ENCODE measurements at regions of chr2 and their contacts with region 1.

Region 1: DNA sequence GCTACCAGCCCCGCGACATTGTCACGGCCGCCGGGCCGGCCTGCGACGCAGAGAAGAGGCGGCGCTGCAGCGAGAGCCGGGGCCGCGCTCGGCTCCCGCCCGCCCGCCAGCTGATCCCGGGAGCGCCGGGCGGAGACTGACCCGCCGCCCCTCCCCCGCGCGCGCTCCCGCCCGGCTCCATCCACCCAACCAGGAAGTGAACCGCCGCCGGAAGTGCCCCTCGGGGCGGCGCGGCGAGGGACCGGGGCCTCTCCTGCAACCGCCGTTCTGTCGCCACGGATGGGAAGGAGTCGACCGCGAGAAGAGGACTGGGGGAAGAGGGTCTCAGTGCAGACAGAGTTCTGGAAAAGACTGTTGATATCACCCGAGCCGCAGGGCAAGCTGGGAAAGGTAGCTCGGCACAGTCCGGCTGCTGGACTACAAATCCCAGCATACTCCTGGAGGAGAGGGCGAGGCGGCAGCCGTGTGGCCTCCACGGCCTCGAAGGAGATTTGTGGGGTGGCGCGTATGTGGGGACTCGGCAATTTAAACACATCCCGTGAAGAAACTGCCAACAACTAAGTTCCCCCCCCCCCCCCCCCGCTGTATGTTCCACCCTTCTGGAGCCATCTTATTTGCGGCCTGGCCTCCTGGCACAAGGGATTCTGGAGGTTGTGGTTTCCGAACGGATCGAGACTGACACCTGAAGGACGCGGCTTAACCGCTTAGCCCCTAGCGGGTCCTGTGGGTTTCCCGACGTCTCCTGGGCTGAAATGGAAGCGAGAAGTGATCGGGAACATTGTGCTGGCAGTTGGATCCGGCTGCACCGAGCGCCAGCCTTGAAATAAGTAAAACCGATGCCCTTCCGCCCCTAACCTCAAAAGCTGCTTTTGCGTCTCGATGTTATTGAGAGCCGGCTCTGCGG is at the start of gene AAK1:
- DNase-seq: peak; percentile 68 to 89 (median 80)
- ATAC-seq: peak; percentile 56 to 67 (median 62)
- H3K4me3 ChIP-seq: peak within 1 kb of the TSS; percentile 77 to 98
- H3K4me3 Mint-ChIP-seq: peak within 1 kb of the TSS; percentile 92 to 96 (median 96)
- H3K27ac ChIP-seq: peak within 1 kb of the TSS; percentile 83
- H3K27ac Mint-ChIP-seq: peak within 1 kb of the TSS; percentile 96 to 97
- H3K4me1 ChIP-seq: peaks cover 51 to 55% of the 10 kb centered on the region in 2 experiments
- H3K4me1 Mint-ChIP-seq: peaks cover 59 to 70% (median 67%) of the 10 kb centered on the region in 3 donors
- H3K27me3 ChIP-seq: no peaks in the 10 kb centered on the region
- H3K27me3 Mint-ChIP-seq: no peaks in the 10 kb centered on the region
- total RNA-seq, gene AAK1: 170 to 283 (median 177) TPM

Region 2: DNA sequence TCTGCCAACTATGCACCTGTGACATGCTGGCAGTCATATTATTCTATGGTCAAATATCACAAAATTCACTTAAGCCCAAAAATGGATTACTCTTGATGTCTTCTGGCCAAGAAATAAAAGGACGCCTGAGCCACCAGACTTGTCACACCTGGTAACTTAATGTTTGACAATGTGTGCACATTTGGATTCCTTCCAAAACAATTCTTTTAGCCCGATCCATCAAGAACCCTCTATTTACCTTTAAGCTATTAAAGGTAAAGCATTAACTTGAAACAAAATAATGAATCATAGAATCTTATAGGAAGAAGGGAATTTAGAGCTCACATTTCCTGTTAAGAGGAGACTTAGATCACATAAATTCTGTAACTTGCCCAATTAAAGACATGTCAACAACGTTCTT is 160.2 kb before region 1 on chr2:
- CTCF ChIA-PET with region 1: no interaction called
- POLR2A ChIA-PET with region 1: no interaction called
- DNase-seq: no peak
- ATAC-seq: no peak
- H3K4me3 ChIP-seq: no peak overlapping the region
- H3K4me3 Mint-ChIP-seq: no peak overlapping the region
- H3K27ac ChIP-seq: no peak overlapping the region
- H3K27ac Mint-ChIP-seq: peak overlapping the region; percentile 39 to 67
- H3K4me1 ChIP-seq: no peaks in the 10 kb centered on the region
- H3K4me1 Mint-ChIP-seq: peaks cover 4 to 31% (median 24%) of the 10 kb centered on the region in 3 donors
- H3K27me3 ChIP-seq: no peaks in the 10 kb centered on the region
- H3K27me3 Mint-ChIP-seq: no peaks in the 10 kb centered on the region

Region 3: GRCh38 chr2:69625078-69625795 is 18.6 kb before region 1 on chr2:
- CTCF ChIA-PET with region 1: interaction called, 3 to 9 read pairs
- POLR2A ChIA-PET with region 1: interaction called in 1 of 2 experiments, 20 read pairs
- DNase-seq: no peak
- ATAC-seq: peak in 2 of 4 experiments; percentile 27 to 35
- H3K4me3 ChIP-seq: no peak overlapping the region
- H3K4me3 Mint-ChIP-seq: no peak overlapping the region
- H3K27ac ChIP-seq: peak overlapping the region; percentile 5
- H3K27ac Mint-ChIP-seq: no peak overlapping the region
- H3K4me1 ChIP-seq: peaks cover 52 to 61% of the 10 kb centered on the region in 2 experiments
- H3K4me1 Mint-ChIP-seq: peaks cover 0 to 20% (median under 1%) of the 10 kb centered on the region in 3 donors
- H3K27me3 ChIP-seq: no peaks in the 10 kb centered on the region
- H3K27me3 Mint-ChIP-seq: no peaks in the 10 kb centered on the region

Region 4: GRCh38 chr2:69724540-69725159 is 80.8 kb after region 1 on chr2:
- CTCF ChIA-PET with region 1: interaction called in 1 of 2 experiments, 11 read pairs
- POLR2A ChIA-PET with region 1: interaction called, 3 to 5 read pairs
- DNase-seq: peak; percentile 53 to 90 (median 76)
- ATAC-seq: peak; percentile 82 to 86 (median 84)
- H3K4me3 ChIP-seq: peak overlapping the region; percentile 11 to 21
- H3K4me3 Mint-ChIP-seq: peak overlapping the region; percentile 17 to 39 (median 21)
- H3K27ac ChIP-seq: no peak overlapping the region
- H3K27ac Mint-ChIP-seq: no peak overlapping the region
- H3K4me1 ChIP-seq: peaks cover 3 to 5% of the 10 kb centered on the region in 2 experiments
- H3K4me1 Mint-ChIP-seq: peaks cover 0 to 6% (median 6%) of the 10 kb centered on the region in 3 donors
- H3K27me3 ChIP-seq: no peaks in the 10 kb centered on the region
- H3K27me3 Mint-ChIP-seq: no peaks in the 10 kb centered on the region

Region 5: GRCh38 chr2:69779258-69780001 is 135.6 kb after region 1 on chr2:
- CTCF ChIA-PET with region 1: no interaction called
- POLR2A ChIA-PET with region 1: interaction called in 1 of 2 experiments, 17 read pairs
- DNase-seq: no peak
- ATAC-seq: no peak
- H3K4me3 ChIP-seq: no peak overlapping the region
- H3K4me3 Mint-ChIP-seq: no peak overlapping the region
- H3K27ac ChIP-seq: no peak overlapping the region
- H3K27ac Mint-ChIP-seq: no peak overlapping the region
- H3K4me1 ChIP-seq: peaks cover 12% of the 10 kb centered on the region in 2 experiments
- H3K4me1 Mint-ChIP-seq: peaks cover 17 to 18% (median 18%) of the 10 kb centered on the region in 3 donors
- H3K27me3 ChIP-seq: no peaks in the 10 kb centered on the region
- H3K27me3 Mint-ChIP-seq: no peaks in the 10 kb centered on the region